ENCODE measurements at regions of chr3 and their contacts with region 1.

Region 1: DNA sequence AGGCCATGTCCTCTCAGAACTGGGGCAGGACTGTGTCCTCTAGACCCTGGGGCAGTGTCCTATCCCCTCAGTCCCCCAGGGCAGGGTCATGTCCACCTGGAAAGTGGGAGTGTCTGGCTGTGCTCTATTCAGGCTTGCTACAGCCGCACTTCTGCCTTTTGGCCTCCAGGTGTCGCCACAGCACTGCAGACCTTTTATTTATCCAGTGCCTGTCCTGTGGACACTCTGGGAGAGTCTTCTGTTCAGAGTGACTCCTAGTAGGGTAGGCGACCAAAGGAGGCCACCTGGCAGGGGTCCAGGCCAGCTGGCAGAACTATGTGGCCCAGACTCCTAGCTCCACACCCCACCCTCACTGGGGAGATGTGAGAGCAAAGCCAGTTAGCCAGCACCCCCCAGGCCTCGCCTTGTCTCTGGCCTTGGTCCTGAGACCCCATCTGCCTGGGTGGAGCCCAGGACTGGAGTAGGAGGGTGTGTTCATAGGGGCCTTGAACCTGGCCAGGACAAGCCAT is 3.9 kb downstream of the TMIE start:
- DNase-seq: peak; percentile 64 to 79 (median 71)
- ATAC-seq: peak; percentile 75 to 86 (median 80)
- H3K4me3 ChIP-seq: no peak overlapping the region
- H3K27ac ChIP-seq: no peak overlapping the region
- H3K4me1 ChIP-seq: peaks cover 4 to 31% (median 16%) of the 10 kb centered on the region in 12 donors
- H3K27me3 ChIP-seq: peaks cover 0 to 19% (median 0%) of the 10 kb centered on the region in 9 donors
- CTCF ChIP-seq: peak; percentile 94 to 99 (median 96)
- POLR2A ChIP-seq: peak in 1 of 2 donors; percentile 16

Region 2: DNA sequence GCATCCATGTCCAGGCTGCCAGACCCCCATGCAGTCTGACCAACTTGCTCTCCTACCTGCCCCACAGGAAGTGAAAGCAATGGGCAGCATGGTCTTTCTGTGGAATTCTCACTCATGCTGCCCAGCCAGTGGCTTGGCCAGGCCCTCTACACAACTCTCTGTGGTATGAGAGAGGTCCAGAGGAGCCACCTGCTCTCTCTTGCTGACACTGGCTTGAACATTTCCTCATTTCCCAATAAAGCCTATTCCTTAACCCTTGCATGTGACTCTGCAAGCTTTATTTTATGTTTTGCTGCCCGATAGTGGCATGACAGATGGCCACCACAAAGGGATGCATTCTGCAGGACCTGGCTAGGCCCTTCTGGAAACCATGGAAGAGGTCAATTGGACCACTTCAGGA is 550.8 kb before region 1 on chr3:
- intact Hi-C with region 1: no loop called
- DNase-seq: no peak
- ATAC-seq: no peak
- H3K4me3 ChIP-seq: no peak overlapping the region
- H3K27ac ChIP-seq: no peak overlapping the region
- H3K4me1 ChIP-seq: peaks cover 0 to 14% (median 0%) of the 10 kb centered on the region in 12 donors
- H3K27me3 ChIP-seq: no peaks in the 10 kb centered on the region
- CTCF ChIP-seq: no peak
- POLR2A ChIP-seq: no peak

Region 3: GRCh38 chr3:46845791-46846623 is 140.9 kb after region 1 on chr3:
- intact Hi-C with region 1: loop called in 4 of 10 experiments (anchors 2 to 10 kb)
- DNase-seq: peak; percentile 71 to 90 (median 81)
- ATAC-seq: peak; percentile 6 to 54 (median 39)
- H3K4me3 ChIP-seq: peak overlapping the region; percentile 25 to 65 (median 52)
- H3K27ac ChIP-seq: peak overlapping the region in 11 of 12 donors; percentile 11 to 85 (median 77)
- H3K4me1 ChIP-seq: peaks cover 0 to 50% (median 31%) of the 10 kb centered on the region in 12 donors
- H3K27me3 ChIP-seq: no peaks in the 10 kb centered on the region
- CTCF ChIP-seq: peak; percentile 35 to 75 (median 56)
- POLR2A ChIP-seq: no peak

Region 4: GRCh38 chr3:46895204-46895660 is 190.2 kb after region 1 on chr3:
- intact Hi-C with region 1: loop called in 7 of 10 experiments (anchors 1 to 5 kb)
- DNase-seq: peak; percentile 68 to 87 (median 78)
- ATAC-seq: peak in 3 of 4 donors; percentile 22 to 63 (median 52)
- H3K4me3 ChIP-seq: no peak overlapping the region
- H3K27ac ChIP-seq: no peak overlapping the region
- H3K4me1 ChIP-seq: peaks cover 0 to 49% (median 26%) of the 10 kb centered on the region in 12 donors
- H3K27me3 ChIP-seq: peaks cover 0 to 22% (median 0%) of the 10 kb centered on the region in 9 donors
- CTCF ChIP-seq: peak; percentile 87 to 96 (median 91)
- POLR2A ChIP-seq: no peak

Region 5: GRCh38 chr3:46909535-46910442 is 204.7 kb after region 1 on chr3:
- intact Hi-C with region 1: loop called in 5 of 10 experiments (anchors 1 to 5 kb)
- DNase-seq: peak; percentile 82 to 91 (median 88)
- ATAC-seq: peak; percentile 68 to 88 (median 82)
- H3K4me3 ChIP-seq: no peak overlapping the region
- H3K27ac ChIP-seq: no peak overlapping the region
- H3K4me1 ChIP-seq: peaks cover 0 to 33% (median 24%) of the 10 kb centered on the region in 12 donors
- H3K27me3 ChIP-seq: no peaks in the 10 kb centered on the region
- CTCF ChIP-seq: peak; percentile 73 to 93 (median 88)
- POLR2A ChIP-seq: no peak

Region 6: GRCh38 chr3:47009225-47010110 is 304.4 kb after region 1 on chr3:
- intact Hi-C with region 1: loop called in 2 of 10 experiments (anchors 10 kb)
- DNase-seq: peak; percentile 92 to 94 (median 94)
- ATAC-seq: peak; percentile 94 to 97 (median 96)
- H3K4me3 ChIP-seq: peak overlapping the region; percentile 44 to 82 (median 63)
- H3K27ac ChIP-seq: peak overlapping the region; percentile 73 to 92 (median 86)
- H3K4me1 ChIP-seq: peaks cover 0 to 22% (median 7%) of the 10 kb centered on the region in 12 donors
- H3K27me3 ChIP-seq: no peaks in the 10 kb centered on the region
- CTCF ChIP-seq: no peak
- POLR2A ChIP-seq: peak; percentile 79 to 92

Region 7: GRCh38 chr3:47324278-47324865 is 619.3 kb after region 1 on chr3:
- intact Hi-C with region 1: loop called in 2 of 10 experiments (anchors 5 to 10 kb)
- DNase-seq: peak in 4 of 5 donors; percentile 37 to 63 (median 50)
- ATAC-seq: peak; percentile 49 to 94 (median 88)
- H3K4me3 ChIP-seq: no peak overlapping the region
- H3K27ac ChIP-seq: no peak overlapping the region
- H3K4me1 ChIP-seq: peaks cover 0 to 8% (median 0%) of the 10 kb centered on the region in 12 donors
- H3K27me3 ChIP-seq: no peaks in the 10 kb centered on the region
- CTCF ChIP-seq: peak; percentile 60 to 80 (median 68)
- POLR2A ChIP-seq: no peak